Activated CD4-positive, alpha-beta T cell treated with anti-CD3 and anti-CD28 coated beads, Interleukin-2, amount 10 ng/mL, durations not matched to agents 24 days and 14 days (primary cell): ENCODE measurements at regions of chr6 and their contacts with region 1.

Region 1: GRCh38 chr6:31403283-31403989 is at the start of gene MICA:
- DNase-seq: peak; percentile 93
- H3K4me3 Mint-ChIP-seq: peak within 1 kb of the TSS; percentile 86
- H3K27ac Mint-ChIP-seq: peak within 1 kb of the TSS; percentile 69
- H3K4me1 Mint-ChIP-seq: peaks cover 59% of the 10 kb centered on the region
- H3K27me3 Mint-ChIP-seq: peaks cover 2% of the 10 kb centered on the region
- total RNA-seq, gene MICA: 6.5 and 7.3 TPM in 2 replicates

Region 2: GRCh38 chr6:31441365-31442267 is 38.2 kb after region 1 on chr6:
- intact Hi-C with region 1: loop called (anchors 1 kb)
- DNase-seq: peak; percentile 95
- H3K4me3 Mint-ChIP-seq: no peak overlapping the region
- H3K27ac Mint-ChIP-seq: no peak overlapping the region
- H3K4me1 Mint-ChIP-seq: peaks cover 2% of the 10 kb centered on the region
- H3K27me3 Mint-ChIP-seq: peaks cover 64% of the 10 kb centered on the region